ENCODE measurements at regions of chr11 and their contacts with region 1.

Region 1: DNA sequence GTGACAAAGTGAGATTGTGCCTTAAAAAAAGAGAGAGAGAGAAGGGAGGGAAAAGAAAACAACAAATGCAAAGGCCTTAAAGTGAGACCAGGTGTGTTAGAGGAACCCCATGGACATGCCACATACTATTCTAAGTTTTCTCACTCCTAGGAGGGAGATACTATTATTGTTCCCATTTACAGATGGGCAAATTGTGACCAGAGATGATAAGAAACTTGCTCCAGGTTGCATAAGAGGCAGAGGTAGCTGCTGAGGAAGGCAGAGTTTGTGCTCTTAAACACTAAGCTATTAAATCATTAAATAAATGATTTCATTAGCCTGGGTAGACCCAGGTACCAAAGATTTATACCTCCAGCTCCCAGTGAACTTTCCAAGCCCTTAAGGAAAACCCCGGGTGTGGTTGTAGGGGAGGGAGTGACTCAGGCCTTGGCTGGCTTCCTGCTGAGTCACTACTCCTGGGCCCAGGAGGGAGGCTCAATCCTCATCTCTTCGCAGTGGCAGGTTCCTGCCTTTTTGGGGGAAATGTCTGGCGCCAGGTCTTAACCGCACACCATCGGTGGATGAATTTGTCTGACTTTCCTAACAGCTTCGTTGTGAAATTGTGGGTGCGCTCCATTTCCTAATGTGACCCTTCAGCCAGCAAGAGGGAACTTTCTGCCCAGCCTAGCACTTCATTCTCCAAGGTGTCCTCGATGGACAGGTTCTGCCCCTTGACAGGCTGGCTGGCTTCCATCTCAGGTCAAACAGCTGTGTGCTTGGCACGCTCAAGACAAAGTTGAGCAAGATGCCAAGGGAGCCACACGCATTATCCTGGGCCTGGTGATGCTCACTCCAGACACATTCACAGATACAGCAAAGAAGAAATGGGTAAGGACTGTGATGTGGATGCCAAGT is 33.4 kb upstream of the PTPRJ start:
- DNase-seq: peak; percentile 26
- H3K4me3 Mint-ChIP-seq: no peak overlapping the region
- H3K27ac Mint-ChIP-seq: peak overlapping the region; percentile 74
- H3K4me1 Mint-ChIP-seq: peaks cover 57% of the 10 kb centered on the region
- H3K27me3 Mint-ChIP-seq: no peaks in the 10 kb centered on the region

Region 2: DNA sequence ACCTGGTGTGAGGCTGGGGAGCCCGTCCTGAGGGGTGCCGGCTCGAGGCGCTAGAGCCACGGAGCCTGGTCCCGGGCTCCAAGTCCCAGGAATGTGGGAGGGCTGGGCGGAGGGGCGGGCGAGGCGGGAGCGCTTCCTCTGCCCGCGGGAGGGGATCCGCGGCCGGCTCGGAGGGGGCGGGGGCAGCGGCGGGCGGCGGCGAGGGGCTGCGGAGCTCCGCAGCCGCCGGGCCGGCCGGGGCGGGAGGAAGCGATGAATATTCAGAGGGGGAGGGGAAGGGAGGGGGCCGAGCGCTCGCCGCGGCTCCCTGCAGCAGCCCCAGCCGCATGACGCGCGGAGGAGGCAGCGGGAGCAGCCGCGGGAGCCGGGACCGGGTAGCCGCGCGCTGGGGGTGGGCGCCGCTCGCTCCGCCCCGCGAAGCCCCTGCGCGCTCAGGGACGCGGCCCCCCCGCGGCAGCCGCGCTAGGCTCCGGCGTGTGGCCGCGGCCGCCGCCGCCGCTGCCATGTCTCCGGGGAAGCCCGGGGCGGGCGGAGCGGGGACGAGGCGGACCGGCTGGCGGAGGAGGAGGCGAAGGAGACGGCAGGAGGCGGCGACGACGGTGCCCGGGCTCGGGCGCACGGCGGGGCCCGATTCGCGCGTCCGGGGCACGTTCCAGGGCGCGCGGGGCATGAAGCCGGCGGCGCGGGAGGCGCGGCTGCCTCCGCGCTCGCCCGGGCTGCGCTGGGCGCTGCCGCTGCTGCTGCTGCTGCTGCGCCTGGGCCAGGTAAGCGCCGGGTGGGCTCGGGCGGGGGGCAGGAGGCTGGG is 33.5 kb after region 1 on chr11 and contains the start of gene PTPRJ:
- intact Hi-C with region 1: loop called (anchors 5 kb)
- DNase-seq: peak; percentile 60
- H3K4me3 Mint-ChIP-seq: peak within 1 kb of the TSS; percentile 92
- H3K27ac Mint-ChIP-seq: peak within 1 kb of the TSS; percentile 54
- H3K4me1 Mint-ChIP-seq: peaks cover 26% of the 10 kb centered on the region
- H3K27me3 Mint-ChIP-seq: peaks cover 12% of the 10 kb centered on the region
- total RNA-seq, gene PTPRJ: 69.6 and 70.3 TPM in 2 replicates